B cell (primary cell): ENCODE measurements at regions of chr12 and their contacts with region 1.

Region 1: GRCh38 chr12:55673638-55674037 is 34.1 kb downstream of the ITGA7 start:
- DNase-seq: peak; percentile 70
- ATAC-seq: peak; percentile 95
- H3K4me3 ChIP-seq: peak overlapping the region in 3 of 5 experiments; percentile 31 to 32 (median 32)
- H3K4me3 Mint-ChIP-seq: peak overlapping the region; percentile 69
- H3K27ac ChIP-seq: peak overlapping the region; percentile 71 to 72
- H3K27ac Mint-ChIP-seq: peak overlapping the region; percentile 92
- H3K4me1 ChIP-seq: peaks cover 24 to 25% of the 10 kb centered on the region in 2 donors
- H3K4me1 Mint-ChIP-seq: peaks cover 24% of the 10 kb centered on the region
- H3K27me3 ChIP-seq: no peaks in the 10 kb centered on the region
- H3K27me3 Mint-ChIP-seq: no peaks in the 10 kb centered on the region
- CTCF ChIP-seq: no peak

Region 2: GRCh38 chr12:55707841-55708694 is 34.4 kb after region 1 on chr12 and contains the start of gene ITGA7:
- CTCF ChIA-PET with region 1: interaction called, 3 read pairs
- POLR2A ChIA-PET with region 1: interaction called, 4 read pairs
- intact Hi-C with region 1: loop called (anchors 5 kb)
- DNase-seq: peak; percentile 56
- ATAC-seq: peak; percentile 84
- H3K4me3 ChIP-seq: peak within 1 kb of the TSS; percentile 38 to 81 (median 58)
- H3K4me3 Mint-ChIP-seq: peak within 1 kb of the TSS; percentile 90
- H3K27ac ChIP-seq: no peak within 1 kb of the TSS
- H3K27ac Mint-ChIP-seq: peak within 1 kb of the TSS; percentile 24
- H3K4me1 ChIP-seq: peaks cover 19 to 21% of the 10 kb centered on the region in 2 donors
- H3K4me1 Mint-ChIP-seq: peaks cover 28% of the 10 kb centered on the region
- H3K27me3 ChIP-seq: peaks cover 0 to 20% (median 8%) of the 10 kb centered on the region in 4 experiments
- H3K27me3 Mint-ChIP-seq: peaks cover 18% of the 10 kb centered on the region
- CTCF ChIP-seq: no peak
- total RNA-seq, gene ITGA7: 2.4 and 2.7 TPM in 2 replicates

Region 3: GRCh38 chr12:55715833-55716581 is 42.4 kb after region 1 on chr12 and contains the start of gene BLOC1S1:
- CTCF ChIA-PET with region 1: interaction called, 5 read pairs
- POLR2A ChIA-PET with region 1: interaction called, 6 read pairs
- intact Hi-C with region 1: loop called (anchors 2 kb)
- DNase-seq: peak; percentile 95
- ATAC-seq: peak; percentile 95
- H3K4me3 ChIP-seq: peak within 1 kb of the TSS; percentile 86 to 98 (median 97)
- H3K4me3 Mint-ChIP-seq: peak within 1 kb of the TSS; percentile 98
- H3K27ac ChIP-seq: peak within 1 kb of the TSS; percentile 81 to 84
- H3K27ac Mint-ChIP-seq: peak within 1 kb of the TSS; percentile 99
- H3K4me1 ChIP-seq: peaks cover 16 to 30% of the 10 kb centered on the region in 2 donors
- H3K4me1 Mint-ChIP-seq: peaks cover 38% of the 10 kb centered on the region
- H3K27me3 ChIP-seq: no peaks in the 10 kb centered on the region
- H3K27me3 Mint-ChIP-seq: no peaks in the 10 kb centered on the region
- CTCF ChIP-seq: no peak
- total RNA-seq, gene BLOC1S1: 67.1 and 71.1 TPM in 2 replicates

Region 4: DNA sequence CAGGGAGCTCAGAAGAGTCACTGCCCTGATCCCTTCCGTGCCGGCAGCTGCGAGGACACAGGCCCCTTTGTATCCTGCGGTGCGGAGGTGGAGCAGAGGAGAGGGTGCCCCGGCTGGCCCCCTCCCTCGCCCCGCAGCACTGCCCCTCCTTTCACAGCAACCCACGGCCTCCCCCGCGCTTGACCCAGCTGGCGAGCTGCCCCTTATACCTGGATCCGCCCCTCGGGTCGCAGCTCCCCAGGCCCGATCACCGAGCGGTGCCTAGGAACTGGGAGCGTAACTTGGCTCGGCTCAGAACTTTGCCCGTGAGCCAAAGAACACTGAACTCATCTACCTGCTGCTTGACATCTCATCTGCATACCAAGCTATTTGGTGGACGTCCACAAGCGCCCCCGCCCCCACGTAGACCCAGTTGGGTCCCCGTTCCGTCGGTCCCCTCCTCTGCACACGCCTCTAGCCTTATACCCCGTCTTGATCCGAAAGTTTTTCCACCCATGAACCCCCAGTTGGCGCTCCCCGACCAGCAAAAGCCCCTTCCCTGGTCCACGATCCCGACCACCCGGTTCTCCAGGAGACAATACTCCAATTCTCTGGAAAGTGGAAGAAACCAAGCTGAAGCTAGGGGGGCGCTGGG is 156.4 kb after region 1 on chr12:
- CTCF ChIA-PET with region 1: no interaction called
- POLR2A ChIA-PET with region 1: no interaction called
- intact Hi-C with region 1: no loop called
- DNase-seq: peak; percentile 65
- ATAC-seq: peak; percentile 4
- H3K4me3 ChIP-seq: peak overlapping the region; percentile 68 to 96 (median 84)
- H3K4me3 Mint-ChIP-seq: peak overlapping the region; percentile 99
- H3K27ac ChIP-seq: peak overlapping the region; percentile 57 to 60
- H3K27ac Mint-ChIP-seq: peak overlapping the region; percentile 97
- H3K4me1 ChIP-seq: peaks cover 36 to 49% of the 10 kb centered on the region in 2 donors
- H3K4me1 Mint-ChIP-seq: peaks cover 48% of the 10 kb centered on the region
- H3K27me3 ChIP-seq: no peaks in the 10 kb centered on the region
- H3K27me3 Mint-ChIP-seq: no peaks in the 10 kb centered on the region
- CTCF ChIP-seq: no peak

Region 5: DNA sequence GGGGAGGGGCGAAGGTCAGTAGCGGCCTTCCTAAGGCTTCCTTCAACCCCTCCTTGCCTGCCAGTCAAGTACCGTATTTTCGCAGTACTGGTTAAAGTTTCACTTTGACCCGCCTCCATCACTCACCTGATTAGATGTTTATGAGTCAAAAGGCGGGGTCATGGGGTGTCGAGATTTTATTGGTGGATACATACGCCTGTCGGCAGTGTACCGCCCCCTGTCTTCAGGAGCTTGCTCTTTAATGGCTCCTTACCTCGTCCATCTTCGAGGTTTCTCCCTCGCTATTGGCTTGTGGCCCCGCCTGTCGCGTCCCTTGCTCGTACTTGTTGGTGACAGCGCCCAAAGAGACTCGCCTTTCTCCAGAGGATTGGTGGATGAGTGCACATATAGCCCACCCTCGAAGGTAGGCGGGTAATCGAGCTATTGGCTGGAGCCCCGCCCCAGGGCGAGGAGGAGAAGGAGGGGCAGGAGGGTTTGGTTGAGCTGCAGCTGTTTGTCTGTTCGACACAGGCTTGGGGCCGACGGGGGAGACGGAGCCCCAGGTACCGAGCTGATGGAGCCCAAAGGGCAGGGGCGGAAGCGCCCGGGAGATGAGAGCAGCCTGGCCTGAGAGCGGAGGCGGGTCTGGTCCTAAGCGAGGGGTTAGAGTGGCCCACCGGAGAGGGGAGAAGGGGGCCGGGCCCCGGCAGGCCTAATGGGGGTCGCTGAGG is 300.1 kb after region 1 on chr12 and contains the start of gene RAB5B:
- CTCF ChIA-PET with region 1: no interaction called
- POLR2A ChIA-PET with region 1: no interaction called
- intact Hi-C with region 1: no loop called
- DNase-seq: peak; percentile 99
- ATAC-seq: peak; percentile 87
- H3K4me3 ChIP-seq: peak within 1 kb of the TSS; percentile 77 to 99 (median 90)
- H3K4me3 Mint-ChIP-seq: no peak within 1 kb of the TSS
- H3K27ac ChIP-seq: peak within 1 kb of the TSS; percentile 85 to 96
- H3K27ac Mint-ChIP-seq: no peak within 1 kb of the TSS
- H3K4me1 ChIP-seq: peaks cover 17% of the 10 kb centered on the region in 2 donors
- H3K4me1 Mint-ChIP-seq: peaks cover 13% of the 10 kb centered on the region
- H3K27me3 ChIP-seq: no peaks in the 10 kb centered on the region
- H3K27me3 Mint-ChIP-seq: no peaks in the 10 kb centered on the region
- CTCF ChIP-seq: no peak
- total RNA-seq, gene RAB5B: 96.1 and 111 TPM in 2 replicates